Posterior vena cava (tissue), 2 donors: ENCODE measurements at regions of chr1 and their contacts with region 1.

Region 1: GRCh38 chr1:60890664-60891063 is 191.7 kb upstream of the NFIA start:
- DNase-seq: no peak

Region 2: DNA sequence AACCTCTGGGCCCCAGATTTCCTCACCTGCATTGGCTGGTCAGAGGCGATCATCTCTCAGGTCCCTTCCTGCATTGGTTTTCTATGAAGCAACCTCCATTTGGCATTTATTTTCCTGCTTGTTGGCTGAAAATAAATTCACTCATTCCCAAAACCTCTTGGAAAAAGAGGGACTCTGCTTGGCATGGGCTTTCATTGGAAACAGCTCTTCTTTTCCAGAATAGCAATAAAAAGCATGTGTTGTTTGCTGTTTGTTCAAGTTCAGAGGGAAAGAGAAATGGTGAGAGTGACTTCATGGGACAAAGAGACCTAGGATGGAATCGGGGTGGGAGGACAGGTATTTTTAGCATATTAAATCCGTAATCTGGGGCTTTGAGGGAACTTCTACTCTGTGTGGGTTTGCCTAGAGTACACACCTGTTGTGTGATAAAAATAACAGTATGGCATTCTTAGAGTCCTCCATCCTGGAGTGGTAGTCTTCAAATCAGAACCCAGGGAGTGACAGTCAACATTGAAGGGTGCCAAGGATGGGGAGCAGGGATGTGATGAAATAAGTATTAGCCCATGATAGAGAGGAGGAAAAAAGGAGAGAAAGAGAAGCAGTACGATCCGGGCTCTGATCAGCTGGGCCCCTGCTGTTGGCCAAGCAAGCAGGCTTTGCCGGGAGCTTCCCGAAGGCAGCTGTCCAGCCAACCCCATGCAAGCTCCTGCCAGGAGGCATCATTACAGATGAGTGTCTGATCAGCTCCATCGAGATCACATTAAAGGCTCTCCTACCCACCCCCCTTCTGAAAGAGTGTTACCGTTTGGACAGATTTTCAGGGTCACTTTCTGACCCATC is 59.8 kb after region 1 on chr1:
- intact Hi-C with region 1: loop called in 1 of 2 experiments (anchors 2 kb)
- DNase-seq: no peak